Left colon (tissue), 2 donors: ENCODE measurements at regions of chr17 and their contacts with region 1.

Region 1: GRCh38 chr17:12744298-12744697 is 45.0 kb upstream of the ARHGAP44 start:
- DNase-seq: no peak
- ATAC-seq: peak; percentile 14

Region 2: GRCh38 chr17:12180644-12181261 is 563.5 kb before region 1 on chr17:
- intact Hi-C with region 1: loop called in 1 of 2 experiments (anchors 10 kb)
- DNase-seq: peak in 1 of 2 donors; percentile 16
- ATAC-seq: no peak

Region 3: GRCh38 chr17:12256380-12256995 is 487.8 kb before region 1 on chr17:
- intact Hi-C with region 1: loop called in 1 of 2 experiments (anchors 10 kb)
- DNase-seq: peak in 1 of 2 donors; percentile 35
- ATAC-seq: peak; percentile 24

Region 4: GRCh38 chr17:12492450-12492849 is 251.8 kb before region 1 on chr17:
- intact Hi-C with region 1: no loop called
- DNase-seq: no peak
- ATAC-seq: no peak

Region 5: DNA sequence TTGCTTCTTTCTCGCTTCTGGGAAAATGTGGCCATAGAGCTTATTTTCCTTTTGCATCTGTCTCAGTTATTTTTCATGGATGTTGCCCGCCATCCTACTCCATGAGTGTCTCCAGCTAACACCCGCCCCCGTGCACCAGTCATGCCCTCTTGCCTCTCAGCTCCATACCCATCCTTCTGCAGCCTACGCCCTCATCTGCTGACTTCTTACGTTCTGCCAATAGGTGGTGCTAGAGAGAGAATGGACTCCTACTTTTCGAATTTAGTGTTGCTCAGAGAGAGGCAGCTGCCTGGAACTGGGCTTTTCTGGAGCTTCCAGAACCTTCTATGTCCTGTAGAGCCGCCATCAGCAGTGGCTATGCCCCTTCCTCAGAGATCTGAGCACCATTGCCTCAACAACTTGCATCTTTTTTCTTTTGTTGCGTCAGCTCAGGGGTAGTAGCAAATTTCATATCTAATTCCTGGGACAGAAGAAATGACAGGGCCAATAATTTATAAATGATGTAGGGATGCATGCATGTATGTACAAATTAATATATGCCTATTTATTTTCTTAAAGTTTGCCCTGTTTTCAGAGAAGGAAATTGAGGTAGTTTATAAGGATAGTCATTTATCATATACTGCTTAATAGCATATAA is 198.3 kb before region 1 on chr17:
- intact Hi-C with region 1: loop called in 1 of 2 experiments (anchors 5 kb)
- DNase-seq: peak in 1 of 2 donors; percentile 15
- ATAC-seq: peak; percentile 86